ENCODE measurements at regions of chr3 and their contacts with region 1.

Region 1: GRCh38 chr3:4895838-4896237 is 83.4 kb upstream of the BHLHE40 start:
- DNase-seq: no peak
- H3K4me3 ChIP-seq: no peak overlapping the region
- H3K27ac ChIP-seq: no peak overlapping the region
- H3K4me1 ChIP-seq: peaks cover 0 to 3% (median 0%) of the 10 kb centered on the region in 4 experiments; a peak in 2 of 7 replicates
- H3K27me3 ChIP-seq: no peaks in the 10 kb centered on the region
- CTCF ChIP-seq: no peak
- EP300 ChIP-seq: no peak
- POLR2A ChIP-seq: no peak
- RAD21 ChIP-seq: no peak

Region 2: GRCh38 chr3:4906107-4906621 is 10.3 kb after region 1 on chr3:
- CTCF ChIA-PET with region 1: interaction called, 12 read pairs
- POLR2A ChIA-PET with region 1: no interaction called
- DNase-seq: no peak
- H3K4me3 ChIP-seq: no peak overlapping the region
- H3K27ac ChIP-seq: no peak overlapping the region
- H3K4me1 ChIP-seq: peaks cover 0 to 6% (median 2%) of the 10 kb centered on the region in 4 experiments; a peak in 3 of 7 replicates
- H3K27me3 ChIP-seq: no peaks in the 10 kb centered on the region; a peak in 1 of 7 replicates
- CTCF ChIP-seq: no peak
- EP300 ChIP-seq: no peak
- POLR2A ChIP-seq: no peak
- RAD21 ChIP-seq: no peak